ENCODE measurements at regions of chr1 and their contacts with region 1.

Region 1: DNA sequence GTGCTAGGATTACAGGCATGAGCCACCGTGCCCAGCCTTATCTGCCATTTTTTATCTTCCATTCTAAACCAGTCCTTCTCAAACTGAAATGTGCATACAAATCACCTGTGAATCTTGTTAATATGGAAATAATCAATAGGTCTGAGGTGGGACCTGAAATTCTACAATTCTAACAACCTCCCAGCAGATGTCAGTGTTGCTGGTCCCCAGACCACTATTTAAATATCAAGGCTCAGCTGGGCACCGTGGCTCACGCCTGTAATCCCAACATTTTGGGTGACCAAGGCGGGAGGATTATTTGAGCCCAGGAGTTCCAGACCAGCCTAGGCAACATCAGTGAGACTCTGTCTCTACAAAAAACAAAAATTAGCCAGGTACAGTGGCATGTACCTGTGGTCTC is 4.1 kb downstream of the UQCRHL start:
- DNase-seq: peak; percentile 45
- H3K4me3 ChIP-seq: no peak overlapping the region
- H3K27ac ChIP-seq: no peak overlapping the region
- H3K4me1 ChIP-seq: peaks cover 25% of the 10 kb centered on the region
- H3K27me3 ChIP-seq: no peaks in the 10 kb centered on the region
- CTCF ChIP-seq: peak in 1 of 2 donors; percentile 40
- POLR2A ChIP-seq: no peak

Region 2: GRCh38 chr1:15994590-15995351 is 191.4 kb after region 1 on chr1:
- CTCF ChIA-PET with region 1: interaction called, 13 read pairs
- POLR2A ChIA-PET with region 1: no interaction called
- dilution Hi-C with region 1: no loop called
- intact Hi-C with region 1: loop called (anchors 1 kb)
- DNase-seq: peak; percentile 71
- H3K4me3 ChIP-seq: no peak overlapping the region
- H3K27ac ChIP-seq: no peak overlapping the region
- H3K4me1 ChIP-seq: no peaks in the 10 kb centered on the region
- H3K27me3 ChIP-seq: peaks cover 0 to 2% of the 10 kb centered on the region in 2 experiments
- CTCF ChIP-seq: peak; percentile 88 to 96
- POLR2A ChIP-seq: no peak

Region 3: DNA sequence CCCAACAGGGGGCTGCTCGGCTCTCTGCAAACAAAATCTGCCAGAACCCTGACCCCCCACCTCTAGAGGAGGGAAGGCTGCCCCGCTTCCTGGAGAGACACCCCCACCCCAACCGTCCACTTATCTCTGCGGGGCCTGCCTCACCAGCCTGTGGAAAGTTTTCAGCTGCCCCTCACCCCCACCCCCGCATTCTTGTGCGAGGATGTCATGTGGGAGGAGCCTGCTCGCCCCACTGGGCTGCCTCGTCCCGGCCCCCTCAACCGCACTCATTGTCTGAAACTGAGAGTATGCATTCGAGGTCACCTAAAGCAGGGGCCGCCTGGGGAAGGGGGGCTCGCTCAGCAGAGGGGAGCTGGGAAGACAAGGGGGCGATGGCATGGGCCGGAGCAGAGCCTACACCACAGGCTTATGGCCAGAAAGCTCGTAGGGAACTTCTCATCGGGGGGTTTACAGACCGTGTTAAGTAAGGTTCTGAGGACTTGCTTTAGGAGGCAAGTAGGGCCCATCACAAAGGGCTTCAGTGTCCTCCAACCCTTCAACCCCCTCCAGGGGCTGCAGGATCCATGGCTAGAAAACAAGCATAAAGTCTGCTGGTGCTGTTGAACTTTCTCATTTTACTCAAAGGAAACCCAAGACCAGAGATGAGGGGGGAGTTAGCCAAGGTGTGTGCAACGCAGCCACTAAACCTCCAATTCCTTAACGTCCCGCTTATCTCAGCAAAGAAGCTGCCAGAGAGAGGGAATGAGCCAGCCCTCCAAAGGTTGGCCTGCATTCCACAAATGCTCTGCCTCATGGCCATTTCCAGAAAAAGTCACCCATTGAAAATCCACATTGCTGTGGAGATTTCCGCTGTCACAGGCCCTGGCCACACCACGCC is 343.2 kb after region 1 on chr1:
- CTCF ChIA-PET with region 1: no interaction called
- POLR2A ChIA-PET with region 1: no interaction called
- dilution Hi-C with region 1: no loop called
- intact Hi-C with region 1: loop called (anchors 5 kb)
- DNase-seq: peak; percentile 93
- H3K4me3 ChIP-seq: peak overlapping the region in 2 of 3 experiments; percentile 14 to 23
- H3K27ac ChIP-seq: peak overlapping the region; percentile 99
- H3K4me1 ChIP-seq: peaks cover 97% of the 10 kb centered on the region
- H3K27me3 ChIP-seq: no peaks in the 10 kb centered on the region
- CTCF ChIP-seq: no peak
- POLR2A ChIP-seq: peak; percentile 55